AG04449 (cell line): ENCODE measurements at regions of chr1 and their contacts with region 1.

Region 1: GRCh38 chr1:68120136-68120791 is 69.8 kb upstream of the DIRAS3 start:
- DNase-seq: peak; percentile 74
- H3K4me3 ChIP-seq: no peak overlapping the region
- CTCF ChIP-seq: peak; percentile 67

Region 2: GRCh38 chr1:67853704-67854103 is 266.6 kb before region 1 on chr1:
- CTCF ChIA-PET with region 1: interaction called, 383 read pairs
- POLR2A ChIA-PET with region 1: no interaction called
- DNase-seq: no peak
- H3K4me3 ChIP-seq: no peak overlapping the region
- CTCF ChIP-seq: peak; percentile 94

Region 3: DNA sequence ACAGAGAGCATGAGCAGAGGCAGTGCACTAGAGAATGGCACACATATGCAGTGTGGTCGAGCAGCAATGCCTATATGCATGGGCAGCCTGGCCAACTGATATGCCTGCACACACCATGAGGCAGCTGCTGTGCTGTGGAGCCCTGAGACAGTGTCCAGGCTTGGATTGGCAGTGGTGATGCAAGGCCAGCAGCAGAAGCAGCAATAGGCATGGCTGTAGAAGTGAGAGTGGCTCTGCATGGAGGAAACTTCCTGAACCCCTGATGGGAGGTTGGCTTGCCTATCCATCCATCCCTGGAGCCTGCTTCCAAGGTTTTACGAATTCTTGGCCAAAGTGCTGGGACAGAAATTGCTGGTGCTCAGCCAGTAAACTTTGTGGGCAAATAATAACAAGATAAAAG is 159.5 kb before region 1 on chr1:
- CTCF ChIA-PET with region 1: no interaction called
- POLR2A ChIA-PET with region 1: no interaction called
- DNase-seq: no peak
- H3K4me3 ChIP-seq: no peak overlapping the region
- CTCF ChIP-seq: no peak

Region 4: GRCh38 chr1:68166348-68166747 is 46.1 kb after region 1 on chr1:
- CTCF ChIA-PET with region 1: interaction called, 10 read pairs
- POLR2A ChIA-PET with region 1: no interaction called
- DNase-seq: no peak
- H3K4me3 ChIP-seq: no peak overlapping the region
- CTCF ChIP-seq: no peak

Region 5: GRCh38 chr1:68321084-68321685 is 200.9 kb after region 1 on chr1:
- CTCF ChIA-PET with region 1: interaction called, 71 read pairs
- POLR2A ChIA-PET with region 1: no interaction called
- DNase-seq: no peak
- H3K4me3 ChIP-seq: no peak overlapping the region
- CTCF ChIP-seq: peak; percentile 68

Region 6: GRCh38 chr1:68358439-68358838 is 238.2 kb after region 1 on chr1:
- CTCF ChIA-PET with region 1: interaction called, 964 read pairs
- POLR2A ChIA-PET with region 1: no interaction called
- DNase-seq: no peak
- H3K4me3 ChIP-seq: no peak overlapping the region
- CTCF ChIP-seq: no peak

Region 7: GRCh38 chr1:68384321-68384813 is 264.1 kb after region 1 on chr1:
- CTCF ChIA-PET with region 1: interaction called, 17 read pairs
- POLR2A ChIA-PET with region 1: no interaction called
- DNase-seq: peak; percentile 99
- H3K4me3 ChIP-seq: no peak overlapping the region
- CTCF ChIP-seq: peak; percentile 55

Region 8: GRCh38 chr1:69737527-69738185 is 1617.4 kb after region 1 on chr1:
- CTCF ChIA-PET with region 1: interaction called, 12 read pairs
- POLR2A ChIA-PET with region 1: no interaction called
- DNase-seq: peak; percentile 23
- H3K4me3 ChIP-seq: no peak overlapping the region
- CTCF ChIP-seq: peak; percentile 61